ENCODE measurements at regions of chr11 and their contacts with region 1.

Region 1: GRCh38 chr11:131674051-131674755 is 303.8 kb downstream of the NTM start:
- DNase-seq: peak; percentile 20 to 40
- ATAC-seq: peak; percentile 60 to 66
- H3K4me3 ChIP-seq: no peak overlapping the region
- H3K27ac ChIP-seq: no peak overlapping the region
- H3K4me1 ChIP-seq: no peaks in the 10 kb centered on the region
- H3K27me3 ChIP-seq: no peaks in the 10 kb centered on the region
- CTCF ChIP-seq: peak; percentile 42 to 86 (median 70)
- POLR2A ChIP-seq: no peak

Region 2: DNA sequence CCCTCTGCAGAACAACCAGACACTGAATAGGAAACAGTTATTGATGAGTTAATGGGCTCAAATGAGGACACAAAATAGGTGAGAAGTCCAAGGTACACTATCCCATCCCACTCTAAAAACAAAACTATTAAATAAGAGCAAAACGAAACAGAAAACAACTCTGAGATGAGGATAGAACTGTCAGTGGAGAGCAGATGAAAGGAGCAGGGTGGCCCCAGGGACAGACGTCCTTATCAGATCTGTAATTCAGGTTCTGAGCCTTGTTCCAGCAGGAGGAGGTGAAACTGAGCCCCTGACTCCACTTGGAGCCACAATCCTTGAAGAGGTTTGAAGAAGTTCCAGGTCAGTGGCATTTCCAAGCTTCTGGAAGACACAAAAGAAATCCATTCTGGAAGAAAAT is 749.4 kb before region 1 on chr11:
- in situ Hi-C with region 1: loop called in 1 of 4 experiments (anchors 10 kb)
- intact Hi-C with region 1: loop called (anchors 5 kb)
- DNase-seq: no peak
- ATAC-seq: no peak
- H3K4me3 ChIP-seq: no peak overlapping the region
- H3K27ac ChIP-seq: no peak overlapping the region
- H3K4me1 ChIP-seq: no peaks in the 10 kb centered on the region
- H3K27me3 ChIP-seq: no peaks in the 10 kb centered on the region
- CTCF ChIP-seq: no peak
- POLR2A ChIP-seq: no peak

Region 3: DNA sequence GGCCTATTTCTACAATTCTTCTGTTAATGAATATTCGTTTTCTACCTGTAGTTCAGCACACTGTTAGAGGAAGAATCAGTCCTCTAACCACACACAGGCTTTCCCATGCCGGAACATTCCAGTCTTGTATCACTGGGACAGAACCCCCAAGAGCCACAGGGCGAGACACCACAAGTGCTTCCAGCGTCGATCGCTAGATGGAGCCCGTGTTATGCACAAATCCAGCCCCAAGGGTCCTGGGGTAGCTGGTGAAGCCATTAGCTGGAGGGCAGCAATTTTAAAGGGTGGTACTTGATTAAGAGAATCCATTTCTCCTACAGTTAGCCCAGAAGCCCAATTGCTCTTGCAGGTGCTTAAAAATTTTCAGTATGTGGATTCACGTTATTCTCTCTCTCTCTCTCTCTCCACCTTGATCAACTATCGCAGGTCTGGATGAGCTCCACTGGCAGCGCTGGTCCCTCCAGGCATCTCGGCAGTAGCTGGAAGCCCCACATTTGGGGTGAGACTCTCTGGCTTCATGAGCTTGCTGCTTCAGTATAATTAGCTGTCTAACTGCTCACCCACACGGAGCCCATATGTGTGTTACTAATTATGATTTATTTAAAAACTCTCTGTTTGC is 609.7 kb before region 1 on chr11:
- in situ Hi-C with region 1: loop called in 3 of 4 experiments (anchors 10 to 25 kb)
- intact Hi-C with region 1: no loop called
- DNase-seq: no peak
- ATAC-seq: no peak
- H3K4me3 ChIP-seq: no peak overlapping the region
- H3K27ac ChIP-seq: no peak overlapping the region
- H3K4me1 ChIP-seq: no peaks in the 10 kb centered on the region
- H3K27me3 ChIP-seq: peaks cover 0 to 7% (median 0%) of the 10 kb centered on the region in 3 donors
- CTCF ChIP-seq: peak in 2 of 5 experiments; percentile 58 to 59
- POLR2A ChIP-seq: no peak

Region 4: GRCh38 chr11:131246663-131247062 is 427.5 kb before region 1 on chr11:
- in situ Hi-C with region 1: no loop called
- intact Hi-C with region 1: loop called (anchors 2 kb)
- DNase-seq: no peak
- ATAC-seq: no peak
- H3K4me3 ChIP-seq: no peak overlapping the region
- H3K27ac ChIP-seq: no peak overlapping the region
- H3K4me1 ChIP-seq: no peaks in the 10 kb centered on the region
- H3K27me3 ChIP-seq: peaks cover 0 to 3% (median 0%) of the 10 kb centered on the region in 3 donors
- CTCF ChIP-seq: peak in 1 of 5 experiments; percentile 22
- POLR2A ChIP-seq: no peak

Region 5: DNA sequence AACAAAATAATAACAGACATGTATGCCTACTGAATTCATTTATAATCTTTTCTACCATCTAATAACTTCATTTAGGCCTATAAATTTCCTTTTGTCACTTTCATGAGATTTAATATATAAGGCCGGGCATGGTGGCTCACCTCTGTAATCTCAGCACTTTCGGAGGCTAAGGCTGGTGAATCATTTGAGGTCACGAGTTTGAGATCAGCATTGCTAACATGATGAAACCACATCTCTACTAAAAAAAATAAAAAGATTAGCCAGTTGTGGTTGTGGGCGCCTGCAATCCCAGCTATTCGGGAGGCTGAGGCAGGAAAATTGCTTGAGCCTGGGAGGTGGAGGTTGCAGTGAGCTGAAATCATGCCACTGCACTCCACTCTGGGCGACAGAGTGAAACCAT is 318.0 kb before region 1 on chr11:
- in situ Hi-C with region 1: no loop called
- intact Hi-C with region 1: loop called (anchors 5 kb)
- DNase-seq: no peak
- ATAC-seq: no peak
- H3K4me3 ChIP-seq: no peak overlapping the region
- H3K27ac ChIP-seq: no peak overlapping the region
- H3K4me1 ChIP-seq: no peaks in the 10 kb centered on the region
- H3K27me3 ChIP-seq: no peaks in the 10 kb centered on the region
- CTCF ChIP-seq: no peak
- POLR2A ChIP-seq: no peak

Region 6: GRCh38 chr11:131579932-131580387 is 94.2 kb before region 1 on chr11:
- in situ Hi-C with region 1: no loop called
- intact Hi-C with region 1: loop called (anchors 5 kb)
- DNase-seq: no peak
- ATAC-seq: no peak
- H3K4me3 ChIP-seq: no peak overlapping the region
- H3K27ac ChIP-seq: no peak overlapping the region
- H3K4me1 ChIP-seq: no peaks in the 10 kb centered on the region
- H3K27me3 ChIP-seq: peaks cover 0 to 4% (median 0%) of the 10 kb centered on the region in 3 donors
- CTCF ChIP-seq: peak in 1 of 5 experiments; percentile 21
- POLR2A ChIP-seq: no peak

Measured in gastrocnemius medialis (tissue), 4 donors.